ENCODE measurements at regions of chr5 and their contacts with region 1.

Region 1: DNA sequence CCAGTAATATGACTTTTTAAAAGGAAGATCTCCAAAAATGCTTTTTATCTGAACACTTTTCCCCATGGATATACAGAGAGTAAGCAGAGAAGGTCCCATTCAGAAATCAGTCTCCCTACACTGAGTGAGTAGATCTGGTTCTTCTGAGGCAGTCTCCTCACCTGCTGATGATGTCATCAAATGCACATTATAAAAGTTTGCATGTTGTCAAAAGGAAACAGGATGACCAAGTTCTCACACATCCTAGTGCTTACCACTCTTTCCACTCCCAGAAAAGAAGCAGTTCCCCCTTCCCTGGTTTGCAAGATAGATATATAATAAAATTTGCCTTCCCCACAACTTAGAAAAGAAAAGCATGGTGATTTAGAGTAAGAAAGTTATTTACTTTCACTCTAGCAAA is 180.5 kb downstream of the RAB3C start:
- DNase-seq: no peak

Region 2: DNA sequence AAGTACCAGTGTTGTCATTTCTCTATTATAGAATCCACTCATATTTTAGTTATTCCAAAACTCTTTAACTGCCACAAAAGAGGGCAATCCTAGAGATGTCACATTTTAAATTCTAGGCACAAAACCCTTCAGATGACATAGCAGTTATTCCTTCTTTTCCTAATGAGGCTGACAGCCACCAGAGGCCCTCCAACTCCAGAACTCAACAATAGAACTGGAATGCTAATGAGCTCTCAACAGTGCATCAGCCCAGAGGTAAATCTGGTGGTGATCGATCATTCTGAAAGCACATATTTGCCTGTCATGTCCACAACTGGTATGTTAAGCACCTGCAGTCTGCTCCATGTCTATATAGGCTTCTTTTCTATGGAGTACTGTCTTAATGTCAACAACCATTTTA is 220.7 kb before region 1 on chr5:
- CTCF ChIA-PET with region 1: no interaction called
- POLR2A ChIA-PET with region 1: no interaction called
- DNase-seq: no peak

Region 3: GRCh38 chr5:58775701-58776262 is 12.4 kb after region 1 on chr5:
- CTCF ChIA-PET with region 1: interaction called, 10 read pairs
- POLR2A ChIA-PET with region 1: no interaction called
- DNase-seq: no peak

Region 4: GRCh38 chr5:58849921-58850667 is 86.7 kb after region 1 on chr5:
- CTCF ChIA-PET with region 1: no interaction called
- POLR2A ChIA-PET with region 1: no interaction called
- DNase-seq: peak; percentile 47

Measured in HEK293T (cell line).